Transverse colon (tissue), 4 donors: ENCODE measurements at regions of chr15 and their contacts with region 1.

Region 1: DNA sequence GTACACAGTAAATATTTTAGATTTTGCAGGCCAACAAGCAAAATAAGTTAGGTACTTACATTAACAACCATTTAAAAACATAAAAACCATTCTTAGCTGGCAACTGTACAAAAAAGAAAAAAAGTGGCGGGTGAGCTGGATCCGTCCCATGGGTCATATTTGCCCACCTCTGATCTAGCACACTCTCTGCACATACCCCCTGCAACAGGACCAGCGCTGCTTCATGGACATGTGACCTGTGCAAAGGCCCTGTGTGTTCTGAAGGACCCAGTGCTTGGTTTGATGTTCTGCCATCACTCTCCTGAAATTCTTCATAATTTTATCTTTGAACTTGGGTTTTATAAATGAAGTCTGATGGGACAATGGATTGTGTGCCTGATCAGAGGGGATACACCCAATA is 72.5 kb upstream of the ACAN start:
- DNase-seq: no peak
- H3K4me3 ChIP-seq: no peak overlapping the region
- H3K27ac ChIP-seq: no peak overlapping the region
- H3K4me1 ChIP-seq: no peaks in the 10 kb centered on the region
- H3K27me3 ChIP-seq: no peaks in the 10 kb centered on the region
- CTCF ChIP-seq: no peak
- EP300 ChIP-seq: no peak
- POLR2A ChIP-seq: no peak

Region 2: GRCh38 chr15:87267798-87268197 is 1463.0 kb before region 1 on chr15:
- in situ Hi-C with region 1: no loop called
- intact Hi-C with region 1: loop called (anchors 5 kb)
- DNase-seq: no peak
- H3K4me3 ChIP-seq: no peak overlapping the region
- H3K27ac ChIP-seq: no peak overlapping the region
- H3K4me1 ChIP-seq: no peaks in the 10 kb centered on the region
- H3K27me3 ChIP-seq: no peaks in the 10 kb centered on the region
- CTCF ChIP-seq: no peak
- EP300 ChIP-seq: no peak
- POLR2A ChIP-seq: no peak

Region 3: GRCh38 chr15:88745696-88746095 is 14.9 kb after region 1 on chr15:
- in situ Hi-C with region 1: no loop called
- intact Hi-C with region 1: no loop called
- DNase-seq: no peak
- H3K4me3 ChIP-seq: no peak overlapping the region
- H3K27ac ChIP-seq: no peak overlapping the region
- H3K4me1 ChIP-seq: no peaks in the 10 kb centered on the region
- H3K27me3 ChIP-seq: peaks cover 14% of the 10 kb centered on the region
- CTCF ChIP-seq: no peak
- EP300 ChIP-seq: no peak
- POLR2A ChIP-seq: no peak

Region 4: DNA sequence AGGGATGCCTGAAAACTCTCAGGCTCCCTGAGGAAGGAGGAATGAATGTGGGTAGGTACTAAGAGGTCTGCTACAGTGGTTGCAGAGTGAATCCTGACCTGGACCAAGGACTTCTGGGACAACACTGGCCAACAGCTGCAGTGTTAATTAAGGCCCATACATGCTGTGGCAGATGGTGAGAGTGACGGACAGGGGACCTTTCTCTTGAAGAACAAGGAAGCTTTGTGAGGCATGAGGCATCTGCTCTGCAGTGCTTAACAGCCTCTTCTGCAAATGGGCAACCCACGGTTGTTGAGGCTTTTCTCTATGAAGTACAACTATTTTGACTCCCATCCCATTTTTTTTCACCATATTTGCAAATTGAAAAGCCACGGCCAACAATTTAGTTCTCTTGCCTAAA is 45.9 kb after region 1 on chr15:
- in situ Hi-C with region 1: no loop called
- intact Hi-C with region 1: no loop called
- DNase-seq: no peak
- H3K4me3 ChIP-seq: no peak overlapping the region
- H3K27ac ChIP-seq: no peak overlapping the region
- H3K4me1 ChIP-seq: no peaks in the 10 kb centered on the region
- H3K27me3 ChIP-seq: peaks cover 4% of the 10 kb centered on the region
- CTCF ChIP-seq: no peak
- EP300 ChIP-seq: no peak
- POLR2A ChIP-seq: no peak

Region 5: GRCh38 chr15:88913017-88913849 is 182.5 kb after region 1 on chr15 and contains the start of gene MFGE8:
- in situ Hi-C with region 1: no loop called
- intact Hi-C with region 1: no loop called
- DNase-seq: peak; percentile 69
- H3K4me3 ChIP-seq: peak within 1 kb of the TSS; percentile 47 to 79 (median 58)
- H3K27ac ChIP-seq: peak within 1 kb of the TSS; percentile 72 to 85 (median 74)
- H3K4me1 ChIP-seq: peaks cover 0 to 11% (median 4%) of the 10 kb centered on the region in 4 donors
- H3K27me3 ChIP-seq: no peaks in the 10 kb centered on the region
- CTCF ChIP-seq: peak in 1 of 5 experiments; percentile 2
- EP300 ChIP-seq: no peak
- POLR2A ChIP-seq: peak; percentile 53
- total RNA-seq, gene MFGE8: 56.9 to 228 (median 74.1) TPM